Panc1 (cell line): ENCODE measurements at regions of chr3 and their contacts with region 1.

Region 1: DNA sequence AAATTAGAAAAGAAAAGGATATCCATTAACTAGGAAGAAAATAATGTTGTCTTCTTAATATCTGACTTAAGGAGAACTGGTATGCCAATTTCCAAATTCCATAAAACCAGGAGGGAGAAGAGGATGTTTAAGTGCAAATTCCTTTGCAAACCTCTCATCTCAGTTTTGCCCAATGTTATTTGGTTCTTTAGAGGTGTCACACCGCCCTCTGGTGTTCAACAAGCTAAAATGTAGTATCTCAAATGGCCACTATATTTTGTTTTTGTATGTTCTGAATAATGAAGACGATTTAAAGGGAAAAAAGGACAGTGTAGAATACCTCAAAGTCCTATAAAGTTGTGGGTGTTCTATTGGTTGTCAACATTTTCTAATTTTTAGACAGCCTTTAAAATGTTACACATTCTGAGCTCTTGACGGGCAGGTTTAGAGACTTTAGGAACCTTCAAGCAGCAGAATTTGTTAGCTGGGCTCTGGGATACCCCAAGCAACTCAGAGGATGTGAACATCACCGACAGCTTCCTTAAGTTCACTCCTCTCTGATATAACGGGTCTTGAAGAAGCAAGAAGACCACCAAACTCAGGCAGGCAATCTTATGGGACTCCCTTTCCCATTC is 458.3 kb downstream of the MFSD1 start:
- DNase-seq: no peak
- ATAC-seq: peak; percentile 74; the same call in 1 of the 2 replicates
- H3K4me3 ChIP-seq: no peak overlapping the region
- H3K27ac ChIP-seq: no peak overlapping the region
- H3K4me1 ChIP-seq: peaks cover 2% of the 10 kb centered on the region; the same call in 1 of the 2 replicates
- H3K27me3 ChIP-seq: 0 out of 2 replicates have a peak, but pooled peaks cover 2% of the 10 kb centered on the region
- CTCF ChIP-seq: peak; percentile 75

Region 2: DNA sequence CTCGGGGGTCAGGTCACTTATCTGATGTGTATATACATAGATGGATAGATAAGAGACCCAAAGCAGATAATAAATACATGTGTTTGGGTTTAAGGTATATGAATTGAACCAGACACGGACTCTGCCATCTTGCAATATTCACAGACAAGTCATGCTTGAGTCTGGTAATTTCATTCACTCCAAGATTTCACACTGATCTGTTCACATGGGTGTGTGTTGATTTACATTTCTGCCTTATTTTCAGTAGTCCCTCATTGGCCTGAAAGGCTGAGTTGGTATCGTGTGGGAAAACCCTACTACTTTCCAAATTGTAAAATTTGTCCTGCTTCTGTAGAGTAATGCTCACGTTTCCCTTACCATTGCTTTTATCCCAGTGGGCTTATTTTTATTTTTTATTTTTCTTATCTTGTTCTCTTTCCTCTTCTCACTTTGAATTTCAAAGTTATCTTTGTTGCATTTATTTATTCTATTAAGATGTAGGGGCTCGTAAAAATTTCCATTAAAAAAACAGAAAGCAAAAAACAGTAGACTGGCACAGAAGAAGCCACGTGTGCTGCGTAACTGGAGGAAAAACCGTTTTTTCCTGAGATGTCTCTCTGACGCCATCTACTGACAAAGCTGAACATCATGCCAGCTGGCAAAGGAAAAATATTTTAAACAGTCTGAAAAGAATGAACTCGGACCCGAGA is 469.1 kb before region 1 on chr3:
- CTCF ChIA-PET with region 1: interaction called, 3 read pairs
- POLR2A ChIA-PET with region 1: no interaction called
- in situ Hi-C with region 1: no loop called
- intact Hi-C with region 1: loop called (anchors 1 kb)
- DNase-seq: no peak
- ATAC-seq: peak; percentile 71
- H3K4me3 ChIP-seq: peak overlapping the region in 1 of 2 experiments; percentile 8; a peak in 1 of 4 replicates
- H3K27ac ChIP-seq: peak overlapping the region; percentile 90
- H3K4me1 ChIP-seq: peaks cover 42% of the 10 kb centered on the region
- H3K27me3 ChIP-seq: no peaks in the 10 kb centered on the region
- CTCF ChIP-seq: peak; percentile 93

Region 3: GRCh38 chr3:158875700-158876099 is 384.5 kb before region 1 on chr3:
- CTCF ChIA-PET with region 1: interaction called, 10 read pairs
- POLR2A ChIA-PET with region 1: no interaction called
- in situ Hi-C with region 1: no loop called
- intact Hi-C with region 1: no loop called
- DNase-seq: no peak
- ATAC-seq: no peak
- H3K4me3 ChIP-seq: no peak overlapping the region
- H3K27ac ChIP-seq: no peak overlapping the region
- H3K4me1 ChIP-seq: no peaks in the 10 kb centered on the region
- H3K27me3 ChIP-seq: peaks cover 10% of the 10 kb centered on the region; the same call in 1 of the 2 replicates
- CTCF ChIP-seq: no peak

Region 4: DNA sequence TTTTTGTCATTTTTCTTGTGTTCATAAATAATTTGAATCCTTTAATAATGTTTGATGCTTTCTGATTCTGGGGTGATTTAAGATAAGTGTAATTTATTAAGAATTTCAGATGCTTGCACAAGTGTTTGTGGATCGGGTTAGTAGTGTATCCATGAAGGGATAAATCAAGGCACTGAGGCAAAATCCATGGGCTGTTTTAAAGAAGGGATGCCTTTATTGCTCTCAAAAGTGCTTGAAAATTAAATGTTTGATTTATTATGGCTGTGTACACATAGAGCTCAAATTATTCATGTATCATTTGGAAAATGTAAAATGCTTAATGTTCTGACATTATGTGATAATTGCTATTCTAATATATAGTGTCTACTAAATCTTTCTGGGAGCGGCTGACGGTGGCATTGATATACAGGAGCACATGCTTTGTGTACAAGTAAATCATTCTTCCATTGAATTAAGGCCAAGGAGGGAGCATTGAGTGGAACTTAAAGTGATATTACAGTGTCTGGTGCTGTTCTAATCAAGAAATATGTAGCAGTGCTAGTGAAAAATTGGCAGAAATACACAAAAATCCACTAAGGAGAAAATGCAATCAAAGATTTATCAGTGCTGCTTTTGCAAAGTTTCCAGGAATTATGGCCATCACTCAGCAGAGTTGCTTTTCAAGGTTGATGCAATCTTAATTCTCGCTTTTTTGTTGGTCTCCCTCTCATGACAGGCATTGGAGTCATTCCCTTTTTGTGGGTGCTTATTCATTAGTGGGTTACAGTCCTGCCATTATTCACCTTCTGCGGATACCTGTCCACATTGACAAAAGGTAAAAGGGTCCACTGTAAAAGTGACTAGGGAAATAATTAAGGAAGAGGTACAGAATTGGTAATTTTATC is 276.7 kb before region 1 on chr3:
- CTCF ChIA-PET with region 1: interaction called, 14 read pairs
- POLR2A ChIA-PET with region 1: no interaction called
- in situ Hi-C with region 1: no loop called
- intact Hi-C with region 1: no loop called
- DNase-seq: no peak
- ATAC-seq: no peak
- H3K4me3 ChIP-seq: no peak overlapping the region
- H3K27ac ChIP-seq: no peak overlapping the region
- H3K4me1 ChIP-seq: no peaks in the 10 kb centered on the region
- H3K27me3 ChIP-seq: no peaks in the 10 kb centered on the region
- CTCF ChIP-seq: no peak

Region 5: GRCh38 chr3:159804726-159805410 is 544.7 kb after region 1 on chr3:
- CTCF ChIA-PET with region 1: no interaction called
- POLR2A ChIA-PET with region 1: no interaction called
- in situ Hi-C with region 1: no loop called
- intact Hi-C with region 1: loop called (anchors 2 kb)
- DNase-seq: peak; percentile 73
- ATAC-seq: peak; percentile 99
- H3K4me3 ChIP-seq: no peak overlapping the region
- H3K27ac ChIP-seq: no peak overlapping the region; the same call in 1 of the 2 replicates
- H3K4me1 ChIP-seq: peaks cover 20% of the 10 kb centered on the region
- H3K27me3 ChIP-seq: no peaks in the 10 kb centered on the region
- CTCF ChIP-seq: peak; percentile 96